ENCODE measurements at regions of chr11 and their contacts with region 1.

Region 1: GRCh38 chr11:94457118-94458029 is 36.3 kb downstream of the MRE11 start:
- DNase-seq: no peak
- H3K4me3 ChIP-seq: no peak overlapping the region
- H3K27ac ChIP-seq: peak overlapping the region; percentile 45
- H3K4me1 ChIP-seq: peaks cover 24% of the 10 kb centered on the region
- H3K27me3 ChIP-seq: no peaks in the 10 kb centered on the region
- CTCF ChIP-seq: no peak

Region 2: GRCh38 chr11:93591247-93591898 is 866.0 kb before region 1 on chr11:
- CTCF ChIA-PET with region 1: interaction called, 10 read pairs
- POLR2A ChIA-PET with region 1: no interaction called
- intact Hi-C with region 1: no loop called
- DNase-seq: no peak
- H3K4me3 ChIP-seq: no peak overlapping the region
- H3K27ac ChIP-seq: no peak overlapping the region
- H3K4me1 ChIP-seq: no peaks in the 10 kb centered on the region
- H3K27me3 ChIP-seq: no peaks in the 10 kb centered on the region
- CTCF ChIP-seq: no peak

Region 3: GRCh38 chr11:94613120-94613519 is 155.7 kb after region 1 on chr11:
- CTCF ChIA-PET with region 1: no interaction called
- POLR2A ChIA-PET with region 1: no interaction called
- intact Hi-C with region 1: no loop called
- DNase-seq: no peak
- H3K4me3 ChIP-seq: no peak overlapping the region
- H3K27ac ChIP-seq: no peak overlapping the region
- H3K4me1 ChIP-seq: no peaks in the 10 kb centered on the region
- H3K27me3 ChIP-seq: no peaks in the 10 kb centered on the region
- CTCF ChIP-seq: no peak

Measured in PC-9 (cell line).